Naive thymus-derived CD4-positive, alpha-beta T cell (primary cell): ENCODE measurements at regions of chr12 and their contacts with region 1.

Region 1: GRCh38 chr12:69585189-69586062 is at the start of gene CCT2:
- DNase-seq: peak; percentile 88 to 96 (median 95)
- ATAC-seq: peak; percentile 97
- H3K4me3 ChIP-seq: peak within 1 kb of the TSS; percentile 100
- H3K4me3 Mint-ChIP-seq: peak within 1 kb of the TSS; percentile 84 to 97 (median 95)
- H3K27ac ChIP-seq: peak within 1 kb of the TSS; percentile 96
- H3K27ac Mint-ChIP-seq: peak within 1 kb of the TSS; percentile 91 to 98 (median 97)
- H3K4me1 ChIP-seq: peaks cover 7 to 11% of the 10 kb centered on the region in 2 donors
- H3K4me1 Mint-ChIP-seq: peaks cover 9 to 28% (median 17%) of the 10 kb centered on the region in 7 donors
- H3K27me3 ChIP-seq: no peaks in the 10 kb centered on the region
- H3K27me3 Mint-ChIP-seq: no peaks in the 10 kb centered on the region
- total RNA-seq, gene CCT2: 106 to 200 (median 157) TPM

Region 2: DNA sequence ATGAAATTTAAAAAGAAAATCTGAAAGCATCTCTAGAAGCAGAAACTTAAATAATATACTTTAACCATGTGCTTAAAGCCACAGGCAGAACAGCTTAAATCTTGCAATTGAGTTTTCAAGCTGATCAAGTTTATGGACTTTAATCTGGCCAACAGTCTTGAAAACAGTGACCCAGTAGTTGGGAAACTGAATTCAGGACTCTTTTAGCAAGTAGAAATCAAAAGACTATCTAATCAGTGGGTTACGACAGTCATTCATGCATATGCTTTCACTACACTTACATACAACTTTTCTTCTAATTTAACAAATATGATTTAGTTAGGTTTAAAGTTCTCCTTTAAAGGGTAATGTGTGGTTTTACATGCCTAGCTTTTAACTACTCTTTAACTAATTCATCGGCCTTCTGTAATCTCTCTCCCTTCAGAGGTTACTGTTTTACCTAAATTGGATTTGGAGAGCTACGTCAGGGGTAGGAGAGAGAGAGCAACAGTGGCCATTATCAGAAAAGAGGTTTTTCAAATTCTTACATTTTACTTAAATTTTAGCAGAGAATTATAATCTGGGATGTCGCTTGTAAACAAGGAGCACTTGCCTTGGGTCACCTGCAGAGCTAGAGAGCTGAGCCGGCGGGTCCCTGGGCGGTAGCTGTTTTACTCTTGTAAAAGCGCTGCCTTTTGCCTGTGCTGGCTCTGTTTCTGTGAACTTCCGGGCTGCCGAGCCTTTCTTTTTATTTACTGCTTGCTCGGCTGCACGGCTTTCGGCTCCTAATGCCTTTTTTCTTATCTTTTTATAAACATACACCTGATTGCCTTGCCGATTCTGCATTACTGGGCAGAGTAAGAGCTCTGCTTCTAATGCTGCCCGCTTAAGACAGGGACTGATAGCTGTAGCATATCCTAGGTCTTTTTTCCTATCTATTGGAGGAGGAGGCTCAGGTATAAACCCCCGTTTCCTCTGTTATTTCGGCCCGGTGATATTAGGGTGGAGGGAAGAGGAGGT is 254.7 kb before region 1 on chr12:
- CTCF ChIA-PET with region 1: no interaction called
- POLR2A ChIA-PET with region 1: interaction called, 17 read pairs
- intact Hi-C with region 1: loop called (anchors 1 kb)
- DNase-seq: peak; percentile 28 to 83 (median 76)
- ATAC-seq: peak; percentile 78
- H3K4me3 ChIP-seq: peak overlapping the region; percentile 83
- H3K4me3 Mint-ChIP-seq: peak overlapping the region; percentile 75 to 97 (median 96)
- H3K27ac ChIP-seq: peak overlapping the region; percentile 92
- H3K27ac Mint-ChIP-seq: peak overlapping the region; percentile 91 to 99 (median 96)
- H3K4me1 ChIP-seq: peaks cover 20 to 51% of the 10 kb centered on the region in 2 donors
- H3K4me1 Mint-ChIP-seq: peaks cover 10 to 76% (median 71%) of the 10 kb centered on the region in 7 donors
- H3K27me3 ChIP-seq: no peaks in the 10 kb centered on the region
- H3K27me3 Mint-ChIP-seq: peaks cover 0 to 20% (median 0%) of the 10 kb centered on the region in 5 donors

Region 3: GRCh38 chr12:69470189-69471075 is 115.0 kb before region 1 on chr12 and contains the start of gene FRS2:
- CTCF ChIA-PET with region 1: no interaction called
- POLR2A ChIA-PET with region 1: interaction called, 3 read pairs
- intact Hi-C with region 1: loop called (anchors 1 kb)
- DNase-seq: peak; percentile 66 to 87 (median 81)
- ATAC-seq: peak; percentile 99
- H3K4me3 ChIP-seq: peak within 1 kb of the TSS; percentile 80
- H3K4me3 Mint-ChIP-seq: peak within 1 kb of the TSS; percentile 91 to 100 (median 96)
- H3K27ac ChIP-seq: peak within 1 kb of the TSS; percentile 94
- H3K27ac Mint-ChIP-seq: peak within 1 kb of the TSS; percentile 91 to 99 (median 97)
- H3K4me1 ChIP-seq: peaks cover 11 to 12% of the 10 kb centered on the region in 2 donors
- H3K4me1 Mint-ChIP-seq: peaks cover 41 to 60% (median 51%) of the 10 kb centered on the region in 7 donors
- H3K27me3 ChIP-seq: no peaks in the 10 kb centered on the region
- H3K27me3 Mint-ChIP-seq: no peaks in the 10 kb centered on the region
- total RNA-seq, gene FRS2: 17.5 to 30.1 (median 24.0) TPM

Region 4: GRCh38 chr12:69598174-69598753 is 12.8 kb after region 1 on chr12:
- CTCF ChIA-PET with region 1: no interaction called
- POLR2A ChIA-PET with region 1: interaction called, 6 read pairs
- intact Hi-C with region 1: loop called in 1 of 2 experiments (anchors 1 kb)
- DNase-seq: no peak
- ATAC-seq: no peak
- H3K4me3 ChIP-seq: no peak overlapping the region
- H3K4me3 Mint-ChIP-seq: no peak overlapping the region
- H3K27ac ChIP-seq: no peak overlapping the region
- H3K27ac Mint-ChIP-seq: peak overlapping the region in 4 of 9 donors; percentile 5 to 69 (median 50)
- H3K4me1 ChIP-seq: no peaks in the 10 kb centered on the region
- H3K4me1 Mint-ChIP-seq: peaks cover 0 to 5% (median 3%) of the 10 kb centered on the region in 7 donors
- H3K27me3 ChIP-seq: no peaks in the 10 kb centered on the region
- H3K27me3 Mint-ChIP-seq: no peaks in the 10 kb centered on the region

Region 5: GRCh38 chr12:69929125-69929524 is 343.7 kb after region 1 on chr12:
- CTCF ChIA-PET with region 1: no interaction called
- POLR2A ChIA-PET with region 1: no interaction called
- intact Hi-C with region 1: no loop called
- DNase-seq: no peak
- ATAC-seq: no peak
- H3K4me3 ChIP-seq: no peak overlapping the region
- H3K4me3 Mint-ChIP-seq: no peak overlapping the region
- H3K27ac ChIP-seq: no peak overlapping the region
- H3K27ac Mint-ChIP-seq: no peak overlapping the region
- H3K4me1 ChIP-seq: no peaks in the 10 kb centered on the region
- H3K4me1 Mint-ChIP-seq: no peaks in the 10 kb centered on the region
- H3K27me3 ChIP-seq: no peaks in the 10 kb centered on the region
- H3K27me3 Mint-ChIP-seq: peaks cover 8 to 24% (median 12%) of the 10 kb centered on the region in 5 donors

Region 6: DNA sequence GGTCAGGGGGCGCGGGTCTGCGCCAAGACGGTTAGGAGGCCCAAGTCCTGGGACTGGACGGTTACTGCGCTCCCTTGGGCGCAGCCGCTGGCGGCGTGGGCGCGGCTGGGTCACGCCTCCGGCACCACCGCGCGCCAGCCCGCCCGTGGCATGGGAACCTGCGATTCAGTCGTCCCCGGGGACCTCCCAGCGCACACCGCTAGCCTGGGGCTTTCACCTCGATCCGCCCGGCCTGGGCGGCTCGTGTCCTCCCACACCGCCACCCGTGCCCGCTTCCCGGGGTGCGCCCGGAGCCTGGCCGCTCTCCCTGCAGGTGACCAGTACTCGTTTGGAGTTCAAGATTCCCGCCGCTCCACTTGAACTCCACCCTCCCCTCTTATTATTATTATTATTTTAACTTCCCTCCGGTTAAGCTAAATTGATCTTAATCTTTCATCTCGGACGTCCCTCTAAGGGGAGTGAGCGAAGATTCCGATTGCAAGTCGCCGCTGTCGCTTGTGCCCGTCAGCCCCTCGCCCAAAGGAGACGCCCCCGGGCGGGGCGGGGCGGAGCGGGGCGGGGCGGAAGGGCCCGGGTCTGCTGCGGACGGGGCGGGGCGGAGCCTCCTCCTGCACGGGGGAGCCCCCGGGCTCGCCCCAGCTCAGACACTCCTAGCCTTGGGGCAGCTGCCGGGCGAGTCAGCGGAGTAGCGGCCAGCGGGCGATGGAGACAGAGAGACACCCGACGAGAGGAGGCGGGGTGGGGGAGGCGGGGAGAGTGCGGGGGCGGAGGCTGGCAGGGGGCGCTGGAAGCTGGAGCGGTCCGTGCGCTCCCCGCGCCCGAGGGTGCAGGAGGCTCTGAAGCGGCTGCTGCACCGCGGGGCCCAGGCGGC is 780.5 kb after region 1 on chr12 and contains the start of gene KCNMB4:
- CTCF ChIA-PET with region 1: no interaction called
- POLR2A ChIA-PET with region 1: no interaction called
- intact Hi-C with region 1: loop called (anchors 10 kb)
- DNase-seq: peak; percentile 48 to 85 (median 68)
- ATAC-seq: peak; percentile 86
- H3K4me3 ChIP-seq: peak within 1 kb of the TSS; percentile 70
- H3K4me3 Mint-ChIP-seq: peak within 1 kb of the TSS; percentile 94 to 99 (median 97)
- H3K27ac ChIP-seq: peak within 1 kb of the TSS; percentile 71
- H3K27ac Mint-ChIP-seq: peak within 1 kb of the TSS; percentile 58 to 91 (median 89)
- H3K4me1 ChIP-seq: peaks cover 16 to 19% of the 10 kb centered on the region in 2 donors
- H3K4me1 Mint-ChIP-seq: peaks cover 12 to 41% (median 34%) of the 10 kb centered on the region in 7 donors
- H3K27me3 ChIP-seq: peaks cover 0 to 4% of the 10 kb centered on the region in 2 donors
- H3K27me3 Mint-ChIP-seq: peaks cover 0 to 54% (median 0%) of the 10 kb centered on the region in 5 donors
- total RNA-seq, gene KCNMB4: 0.31 to 1.9 (median 1.4) TPM